GM10248 (cell line): ENCODE measurements at regions of chr19 and their contacts with region 1.

Region 1: DNA sequence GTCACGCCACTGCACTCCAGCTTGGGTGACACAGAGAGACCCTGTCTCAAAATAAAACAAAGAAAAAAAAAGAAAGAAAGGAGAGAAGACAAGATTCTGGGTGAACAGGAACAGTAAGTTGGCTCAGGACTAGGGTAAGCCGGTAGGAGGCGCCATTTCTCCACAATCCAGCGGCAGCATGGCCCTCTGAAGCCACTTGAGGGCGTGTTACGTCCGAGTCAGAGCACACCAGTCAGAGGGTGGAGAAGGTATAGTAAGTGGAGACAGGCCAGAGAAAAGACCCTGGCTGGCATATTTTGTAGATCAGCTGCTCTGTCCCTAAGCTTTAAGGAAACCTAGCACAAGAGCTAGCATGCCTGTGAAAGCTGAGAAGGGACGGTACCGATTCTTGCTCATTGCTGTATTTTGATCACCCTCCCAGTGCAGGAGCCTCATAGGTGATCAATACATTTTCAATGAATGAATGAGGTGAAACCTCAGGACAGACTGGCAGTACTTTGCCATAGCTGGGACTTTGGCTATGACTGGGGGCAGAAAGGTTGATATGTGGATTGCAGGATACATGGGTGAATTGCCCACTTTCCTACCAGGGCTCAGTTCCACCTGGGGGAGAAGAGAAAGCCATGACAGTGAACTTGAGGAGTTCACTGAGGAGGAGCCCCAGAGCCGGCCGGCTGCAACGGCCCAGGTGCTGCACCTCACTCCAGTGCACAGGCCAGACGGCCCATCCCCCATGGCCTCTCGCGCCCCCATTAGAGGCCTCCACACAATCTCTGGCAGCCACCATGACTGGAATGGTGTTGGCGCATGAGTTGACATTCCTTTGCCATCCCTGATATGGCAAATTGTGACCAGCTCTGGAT is 23.5 kb downstream of the POU2F2 start:
- DNase-seq: peak; percentile 88
- CTCF ChIP-seq: peak; percentile 100

Region 2: GRCh38 chr19:42092350-42092749 is 16.4 kb before region 1 on chr19:
- CTCF ChIA-PET with region 1: interaction called, 29 read pairs
- POLR2A ChIA-PET with region 1: no interaction called
- DNase-seq: no peak
- CTCF ChIP-seq: peak; percentile 55

Region 3: GRCh38 chr19:42132851-42133528 is 24.2 kb after region 1 on chr19:
- CTCF ChIA-PET with region 1: interaction called, 44 read pairs
- POLR2A ChIA-PET with region 1: no interaction called
- DNase-seq: peak; percentile 91
- CTCF ChIP-seq: peak; percentile 96

Region 4: DNA sequence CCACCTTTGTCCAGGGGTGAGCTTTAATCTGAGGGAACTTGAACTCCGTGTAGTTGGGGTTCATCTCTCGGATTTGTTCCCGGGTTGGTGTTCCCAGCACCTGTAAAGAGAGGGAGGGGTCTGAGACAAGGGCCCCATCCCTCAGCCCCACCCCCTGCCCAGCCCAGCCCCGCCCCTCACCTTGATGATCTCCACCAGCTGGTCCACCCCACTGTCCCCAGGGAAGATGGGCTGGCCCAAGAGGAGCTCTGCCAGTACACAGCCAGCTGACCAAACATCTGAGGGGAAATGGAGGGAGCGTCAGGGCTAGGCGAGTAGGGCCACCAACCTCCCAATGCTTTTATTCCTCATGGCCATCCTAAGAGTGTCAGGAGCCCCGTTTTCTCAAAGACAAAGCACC is 124.3 kb after region 1 on chr19:
- CTCF ChIA-PET with region 1: interaction called, 12 read pairs
- POLR2A ChIA-PET with region 1: no interaction called
- DNase-seq: no peak
- CTCF ChIP-seq: no peak

Region 5: DNA sequence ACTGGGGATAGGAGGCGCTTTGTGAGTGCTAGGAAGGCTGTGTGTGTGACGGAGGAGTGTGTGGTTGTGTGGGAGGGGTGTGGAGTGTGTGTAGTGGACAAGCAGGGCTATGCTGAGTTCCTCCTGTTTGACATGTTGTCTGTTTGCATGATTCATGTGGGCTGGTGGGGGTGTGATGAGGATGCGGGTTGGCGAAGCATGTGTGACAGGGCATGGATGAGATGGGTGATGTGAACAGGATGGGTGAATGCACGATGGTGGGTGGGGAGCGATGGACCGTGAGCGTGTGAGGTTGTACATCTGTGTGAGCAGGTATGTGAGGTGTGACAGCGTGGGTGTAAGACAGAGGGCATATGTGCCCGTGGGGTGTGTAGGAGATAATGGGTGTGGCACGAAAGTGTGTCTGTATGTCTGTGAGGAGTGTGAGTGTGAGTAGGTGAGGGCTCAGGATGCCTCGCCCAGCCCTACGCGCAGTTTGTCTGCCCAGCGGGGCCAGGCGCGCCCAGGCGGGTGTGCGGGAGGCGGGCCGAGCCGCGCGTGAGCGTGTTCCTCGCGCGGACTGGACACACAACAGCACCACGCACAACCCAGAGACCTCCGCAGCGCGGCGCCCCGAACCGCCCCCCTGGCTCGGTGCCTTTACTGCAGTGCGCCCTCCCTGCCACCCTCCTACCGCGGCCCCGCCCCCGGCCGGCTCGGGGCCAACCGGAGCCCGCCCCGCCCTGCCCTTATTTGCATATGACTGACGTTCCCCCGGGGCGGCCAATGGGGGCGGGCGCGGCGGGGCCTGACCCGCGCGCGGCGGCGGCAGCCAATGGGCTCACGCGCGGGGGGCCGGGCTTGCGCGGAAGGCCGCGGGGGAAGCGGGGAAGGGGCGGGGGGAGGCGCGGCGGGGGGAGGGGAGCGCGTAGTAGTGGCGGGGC is 174.6 kb after region 1 on chr19:
- CTCF ChIA-PET with region 1: interaction called, 10 read pairs
- POLR2A ChIA-PET with region 1: no interaction called
- DNase-seq: peak; percentile 95
- CTCF ChIP-seq: no peak

Region 6: DNA sequence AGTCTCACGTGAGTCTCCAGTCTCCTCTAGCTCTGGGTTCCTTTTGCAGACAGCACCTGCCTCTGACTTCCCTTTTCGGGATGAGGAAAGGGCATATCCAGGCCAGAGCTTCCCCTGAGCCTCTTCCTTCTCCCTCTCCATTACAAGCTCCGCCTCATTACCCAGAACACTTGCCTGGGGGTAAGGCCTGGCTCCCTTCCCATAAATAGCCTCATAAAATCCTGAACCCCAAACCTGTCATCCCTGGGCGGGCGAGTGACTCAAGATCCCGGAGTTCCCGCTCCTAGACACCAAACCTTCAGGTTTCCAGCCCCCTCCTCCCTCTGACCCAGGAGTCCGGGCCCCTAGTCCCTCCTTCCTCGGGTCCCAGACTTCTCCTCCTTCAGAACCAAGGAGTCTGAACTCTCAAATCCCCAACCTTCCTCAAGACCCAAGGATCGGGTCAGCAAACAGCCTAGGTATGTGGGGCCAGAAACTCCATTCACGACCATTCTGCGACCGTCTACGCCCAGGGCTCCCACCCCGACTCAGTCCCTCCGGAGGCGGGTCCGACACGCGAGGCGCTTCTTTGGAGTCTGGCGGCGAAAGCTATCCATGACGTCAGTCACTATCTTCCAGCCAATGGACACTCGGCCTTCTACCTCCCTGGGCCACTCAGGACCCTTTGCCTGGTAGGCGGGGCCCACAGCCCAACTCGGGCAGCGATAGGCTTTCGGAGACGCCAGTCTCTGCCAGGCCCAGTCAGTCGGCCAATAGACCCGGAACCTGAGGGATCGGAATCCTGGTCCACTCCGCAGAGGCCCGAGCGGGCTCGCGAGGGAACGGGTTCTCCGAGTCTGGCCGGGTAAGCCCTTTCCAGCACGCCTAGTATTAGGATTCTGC is 287.9 kb after region 1 on chr19:
- CTCF ChIA-PET with region 1: interaction called, 11 read pairs
- POLR2A ChIA-PET with region 1: no interaction called
- DNase-seq: peak; percentile 100
- CTCF ChIP-seq: no peak